ENCODE measurements at regions of chr19 and their contacts with region 1.

Region 1: DNA sequence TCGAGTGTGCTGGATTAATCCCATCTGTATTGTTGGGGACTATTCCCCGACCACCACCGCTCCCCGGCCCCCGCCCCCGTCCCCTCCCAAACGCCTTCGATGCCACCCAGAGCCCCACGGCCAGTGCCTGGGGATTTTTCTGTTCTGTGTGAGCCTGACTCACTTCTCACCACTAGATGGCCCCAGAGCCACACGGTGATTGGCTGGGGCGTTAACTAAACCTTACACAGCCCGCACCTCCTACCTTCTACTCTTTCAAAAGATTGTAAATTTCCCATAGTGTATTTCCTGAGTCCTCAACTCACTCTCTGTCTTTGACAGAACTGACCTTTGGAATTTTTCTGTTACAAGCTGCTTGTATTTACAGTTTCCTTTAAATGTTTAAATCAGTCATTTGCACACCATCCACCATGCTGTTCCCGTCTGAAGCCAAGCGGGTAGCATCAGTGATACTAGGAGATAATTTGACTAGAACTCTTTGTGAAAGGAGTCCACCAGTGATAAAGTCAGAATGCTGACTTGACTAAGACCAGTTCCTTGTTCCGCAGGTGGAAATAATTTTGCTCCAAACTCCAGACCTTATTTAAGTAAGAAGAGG is 61.4 kb downstream of the RFX2 start:
- DNase-seq: peak; percentile 62
- ATAC-seq: peak; percentile 96
- H3K4me3 Mint-ChIP-seq: no peak overlapping the region
- H3K27ac Mint-ChIP-seq: no peak overlapping the region
- H3K4me1 Mint-ChIP-seq: peaks cover 4% of the 10 kb centered on the region
- H3K27me3 Mint-ChIP-seq: no peaks in the 10 kb centered on the region
- CTCF ChIP-seq: no peak

Region 2: GRCh38 chr19:5987077-5987818 is 61.7 kb before region 1 on chr19:
- CTCF ChIA-PET with region 1: interaction called, 7 read pairs
- POLR2A ChIA-PET with region 1: interaction called, 4 read pairs
- intact Hi-C with region 1: loop called (anchors 1 kb)
- DNase-seq: peak; percentile 48
- ATAC-seq: peak; percentile 61
- H3K4me3 Mint-ChIP-seq: peak overlapping the region; percentile 78
- H3K27ac Mint-ChIP-seq: no peak overlapping the region
- H3K4me1 Mint-ChIP-seq: peaks cover 23% of the 10 kb centered on the region
- H3K27me3 Mint-ChIP-seq: no peaks in the 10 kb centered on the region
- CTCF ChIP-seq: no peak

Region 3: DNA sequence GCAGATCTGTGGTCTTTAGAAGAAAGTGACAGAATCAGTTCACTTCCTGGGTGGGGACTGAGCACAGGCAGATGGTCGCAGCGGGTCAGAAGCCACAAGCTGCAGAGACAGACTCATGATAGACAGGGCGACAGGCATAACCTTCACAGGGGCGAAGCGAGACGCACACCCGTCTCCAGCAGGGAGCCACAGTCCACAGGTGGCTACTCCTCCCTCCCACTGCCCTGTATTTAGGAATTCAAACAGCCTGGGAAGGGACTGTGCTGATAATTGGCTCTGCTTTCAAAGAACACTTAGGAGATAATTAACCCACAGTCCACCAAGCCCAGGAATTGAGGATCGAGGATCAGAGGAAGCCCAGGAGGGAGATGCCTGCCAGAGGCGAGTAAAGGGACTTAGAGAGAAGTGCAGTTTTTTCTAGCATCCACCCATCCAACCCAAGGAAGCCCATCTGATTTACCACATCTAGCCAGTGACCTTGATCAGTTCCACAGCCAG is 38.2 kb after region 1 on chr19:
- CTCF ChIA-PET with region 1: interaction called, 13 read pairs
- POLR2A ChIA-PET with region 1: interaction called, 3 read pairs
- intact Hi-C with region 1: no loop called
- DNase-seq: no peak
- ATAC-seq: peak; percentile 49
- H3K4me3 Mint-ChIP-seq: peak overlapping the region; percentile 73
- H3K27ac Mint-ChIP-seq: peak overlapping the region; percentile 91
- H3K4me1 Mint-ChIP-seq: peaks cover 32% of the 10 kb centered on the region
- H3K27me3 Mint-ChIP-seq: no peaks in the 10 kb centered on the region
- CTCF ChIP-seq: no peak

Region 4: GRCh38 chr19:6100284-6100915 is 51.5 kb after region 1 on chr19:
- CTCF ChIA-PET with region 1: interaction called, 4 read pairs
- POLR2A ChIA-PET with region 1: no interaction called
- intact Hi-C with region 1: loop called (anchors 1 kb)
- DNase-seq: peak; percentile 37
- ATAC-seq: peak; percentile 87
- H3K4me3 Mint-ChIP-seq: peak overlapping the region; percentile 84
- H3K27ac Mint-ChIP-seq: peak overlapping the region; percentile 84
- H3K4me1 Mint-ChIP-seq: peaks cover 17% of the 10 kb centered on the region
- H3K27me3 Mint-ChIP-seq: no peaks in the 10 kb centered on the region
- CTCF ChIP-seq: no peak

Region 5: GRCh38 chr19:6125571-6125989 is 76.7 kb after region 1 on chr19:
- CTCF ChIA-PET with region 1: interaction called, 138 read pairs
- POLR2A ChIA-PET with region 1: interaction called, 7 read pairs
- intact Hi-C with region 1: loop called (anchors 1 kb)
- DNase-seq: peak; percentile 32
- ATAC-seq: peak; percentile 97
- H3K4me3 Mint-ChIP-seq: no peak overlapping the region
- H3K27ac Mint-ChIP-seq: no peak overlapping the region
- H3K4me1 Mint-ChIP-seq: peaks cover 5% of the 10 kb centered on the region
- H3K27me3 Mint-ChIP-seq: peaks cover 2% of the 10 kb centered on the region
- CTCF ChIP-seq: no peak

Region 6: DNA sequence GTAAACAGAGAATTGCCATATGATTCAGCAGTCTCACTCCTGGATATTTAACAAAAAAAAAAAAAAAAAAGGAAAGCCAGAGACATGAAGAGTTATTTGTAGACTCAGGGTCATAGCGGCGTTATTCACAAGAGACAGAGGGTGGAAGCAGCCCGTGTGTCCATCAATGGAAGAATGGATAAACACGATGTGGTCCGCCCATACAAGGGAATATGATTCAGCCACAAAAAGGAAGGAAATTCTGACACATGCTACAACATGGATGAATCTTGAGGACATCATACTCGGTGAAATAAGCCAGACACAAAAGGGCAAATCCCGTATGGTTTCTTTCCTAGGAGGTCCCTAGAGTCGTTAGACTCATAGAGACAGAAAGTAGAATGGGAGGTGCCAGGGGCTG is 101.4 kb after region 1 on chr19:
- CTCF ChIA-PET with region 1: no interaction called
- POLR2A ChIA-PET with region 1: interaction called, 13 read pairs
- intact Hi-C with region 1: no loop called
- DNase-seq: no peak
- ATAC-seq: no peak
- H3K4me3 Mint-ChIP-seq: no peak overlapping the region
- H3K27ac Mint-ChIP-seq: no peak overlapping the region
- H3K4me1 Mint-ChIP-seq: no peaks in the 10 kb centered on the region
- H3K27me3 Mint-ChIP-seq: peaks cover 4% of the 10 kb centered on the region
- CTCF ChIP-seq: no peak

Region 7: GRCh38 chr19:6372594-6373095 is 323.7 kb after region 1 on chr19 and contains the start of gene ALKBH7:
- CTCF ChIA-PET with region 1: no interaction called
- POLR2A ChIA-PET with region 1: no interaction called
- intact Hi-C with region 1: no loop called
- DNase-seq: peak; percentile 84
- ATAC-seq: peak; percentile 74
- H3K4me3 Mint-ChIP-seq: peak within 1 kb of the TSS; percentile 92
- H3K27ac Mint-ChIP-seq: peak within 1 kb of the TSS; percentile 93
- H3K4me1 Mint-ChIP-seq: peaks cover 15% of the 10 kb centered on the region
- H3K27me3 Mint-ChIP-seq: no peaks in the 10 kb centered on the region
- CTCF ChIP-seq: no peak
- total RNA-seq, gene ALKBH7: 48.4 and 52.9 TPM in 2 replicates

Region 8: DNA sequence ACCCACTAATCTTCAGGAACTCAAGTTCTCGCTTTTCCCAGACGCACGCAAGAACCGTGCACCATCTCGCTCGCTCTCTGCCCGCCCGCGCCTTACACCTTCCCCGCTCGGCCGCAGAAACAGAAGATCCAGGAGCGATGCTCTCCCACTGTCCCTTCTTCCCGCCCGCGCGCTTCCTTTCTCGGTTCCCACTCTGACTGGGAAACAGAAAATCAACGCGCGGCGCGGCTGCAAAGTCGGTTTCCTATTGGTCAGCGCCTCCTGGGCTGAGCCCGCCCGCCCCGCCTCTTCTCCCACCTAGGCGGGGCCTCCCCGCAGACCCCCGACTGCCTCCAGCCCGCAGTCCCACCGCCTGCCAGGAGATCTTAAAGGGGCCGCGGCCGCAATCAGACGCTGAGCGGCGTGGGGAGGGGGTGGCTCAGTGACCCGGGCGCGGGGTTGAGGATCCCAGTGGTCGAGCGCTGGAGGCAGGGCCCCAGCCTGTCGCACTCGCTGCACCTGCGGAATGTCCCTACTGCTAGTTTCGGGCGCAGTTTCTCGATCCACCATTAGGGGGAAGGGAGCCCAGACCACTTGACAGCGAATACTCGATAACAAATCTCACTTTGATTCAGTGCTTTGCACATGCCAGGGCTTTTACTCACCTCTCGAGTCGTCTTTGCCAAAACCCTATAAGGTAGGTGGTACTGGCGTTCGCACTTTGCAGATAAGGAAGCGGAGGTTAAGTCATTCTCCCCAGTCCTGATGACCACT is 411.4 kb after region 1 on chr19:
- CTCF ChIA-PET with region 1: no interaction called
- POLR2A ChIA-PET with region 1: interaction called, 11 read pairs
- intact Hi-C with region 1: no loop called
- DNase-seq: peak; percentile 90
- ATAC-seq: peak; percentile 82
- H3K4me3 Mint-ChIP-seq: peak overlapping the region; percentile 90
- H3K27ac Mint-ChIP-seq: peak overlapping the region; percentile 79
- H3K4me1 Mint-ChIP-seq: peaks cover 42% of the 10 kb centered on the region
- H3K27me3 Mint-ChIP-seq: peaks cover 3% of the 10 kb centered on the region
- CTCF ChIP-seq: no peak

Measured in activated B cell treated with CpG ODN at 0.5 μM for 24 hours (primary cell).